PC-9 (cell line): ENCODE measurements at regions of chr12 and their contacts with region 1.

Region 1: DNA sequence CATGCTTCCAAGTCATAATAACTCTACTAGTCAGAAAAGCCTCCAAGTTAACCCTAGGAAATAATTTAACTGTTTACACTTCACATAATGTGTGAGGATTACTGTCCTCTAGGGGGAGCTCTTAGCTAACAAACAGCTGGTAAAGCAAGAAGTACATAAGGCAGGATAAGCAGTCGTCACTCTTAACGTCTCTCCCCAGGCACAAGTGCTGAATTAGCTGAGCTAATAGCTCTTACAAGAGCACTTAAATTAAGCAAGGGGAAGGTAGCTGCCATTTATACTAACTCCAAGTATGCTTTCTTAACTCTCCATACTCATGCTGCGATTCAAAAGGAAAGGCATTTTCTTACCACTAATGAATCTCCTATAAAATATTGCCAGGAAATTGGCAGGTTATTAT is 79.3 kb upstream of the TSPAN11 start:
- DNase-seq: peak; percentile 33 to 61
- H3K4me3 ChIP-seq: no peak overlapping the region
- H3K27ac ChIP-seq: no peak overlapping the region
- H3K4me1 ChIP-seq: peaks cover 5% of the 10 kb centered on the region; the same call in 1 of the 2 replicates
- H3K27me3 ChIP-seq: no peaks in the 10 kb centered on the region
- CTCF ChIP-seq: peak; percentile 97

Region 2: DNA sequence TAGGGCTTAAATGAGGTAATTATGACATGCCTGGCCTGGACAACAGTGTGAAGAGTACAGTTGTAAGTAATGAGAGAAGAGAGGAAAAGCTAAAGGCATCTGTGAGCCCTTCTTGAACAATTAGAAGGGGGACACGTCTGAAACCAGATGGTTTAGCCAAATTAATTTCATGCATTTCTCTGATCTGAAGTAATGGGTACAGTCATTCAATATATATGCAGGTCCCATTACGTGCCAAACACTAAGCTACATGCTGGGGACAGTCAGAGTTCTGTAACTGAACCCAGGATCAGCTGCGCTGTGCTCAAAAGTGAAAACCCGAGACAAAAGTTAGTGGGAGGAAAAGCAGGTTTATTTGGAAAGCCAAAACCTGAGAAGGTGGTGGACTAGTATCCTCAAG is 856.3 kb before region 1 on chr12:
- CTCF ChIA-PET with region 1: interaction called, 11 read pairs
- POLR2A ChIA-PET with region 1: no interaction called
- intact Hi-C with region 1: no loop called
- DNase-seq: no peak
- H3K4me3 ChIP-seq: no peak overlapping the region
- H3K27ac ChIP-seq: no peak overlapping the region
- H3K4me1 ChIP-seq: no peaks in the 10 kb centered on the region
- H3K27me3 ChIP-seq: no peaks in the 10 kb centered on the region
- CTCF ChIP-seq: no peak

Region 3: DNA sequence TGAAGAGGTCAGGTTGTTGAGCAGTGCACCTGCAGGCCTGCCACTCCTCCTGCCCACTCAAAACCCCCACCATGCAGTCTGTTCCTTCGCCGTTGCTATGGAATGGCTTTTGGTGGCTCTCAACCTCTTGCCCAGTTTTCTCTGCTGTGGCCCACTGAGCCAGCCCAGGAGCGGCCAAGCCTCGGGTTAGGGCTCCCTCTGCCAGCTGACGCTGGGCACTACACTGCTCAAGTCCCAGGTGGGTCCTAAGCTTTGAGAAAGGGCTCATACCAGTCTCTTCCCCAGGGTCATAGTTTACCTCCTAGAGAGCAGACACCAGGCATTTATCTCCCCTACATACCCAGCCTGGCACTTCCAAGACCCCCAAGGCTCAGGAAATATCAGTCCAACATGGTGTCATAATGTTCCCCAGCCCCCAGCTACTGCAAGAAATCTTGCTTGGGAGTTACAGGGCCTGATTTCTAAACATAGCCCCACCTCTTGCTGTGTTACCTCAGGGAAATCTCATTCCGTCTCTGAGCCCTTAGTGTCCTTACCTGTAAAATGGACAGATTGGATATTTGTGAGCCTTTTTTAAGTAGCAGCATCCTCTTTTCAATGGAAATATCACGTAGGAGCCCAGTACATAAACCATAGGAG is 138.7 kb after region 1 on chr12:
- CTCF ChIA-PET with region 1: interaction called, 31 read pairs
- POLR2A ChIA-PET with region 1: no interaction called
- intact Hi-C with region 1: loop called (anchors 1 kb)
- DNase-seq: peak in 1 of 2 experiments; percentile 73
- H3K4me3 ChIP-seq: no peak overlapping the region
- H3K27ac ChIP-seq: no peak overlapping the region
- H3K4me1 ChIP-seq: peaks cover 11% of the 10 kb centered on the region
- H3K27me3 ChIP-seq: no peaks in the 10 kb centered on the region
- CTCF ChIP-seq: peak; percentile 84

Region 4: GRCh38 chr12:31238764-31239387 is 391.6 kb after region 1 on chr12:
- CTCF ChIA-PET with region 1: interaction called, 10 read pairs
- POLR2A ChIA-PET with region 1: no interaction called
- intact Hi-C with region 1: loop called (anchors 1 kb)
- DNase-seq: peak in 1 of 2 experiments; percentile 71
- H3K4me3 ChIP-seq: peak overlapping the region; percentile 26; the same call in 1 of the 2 replicates
- H3K27ac ChIP-seq: no peak overlapping the region
- H3K4me1 ChIP-seq: no peaks in the 10 kb centered on the region
- H3K27me3 ChIP-seq: no peaks in the 10 kb centered on the region
- CTCF ChIP-seq: peak; percentile 83

Region 5: DNA sequence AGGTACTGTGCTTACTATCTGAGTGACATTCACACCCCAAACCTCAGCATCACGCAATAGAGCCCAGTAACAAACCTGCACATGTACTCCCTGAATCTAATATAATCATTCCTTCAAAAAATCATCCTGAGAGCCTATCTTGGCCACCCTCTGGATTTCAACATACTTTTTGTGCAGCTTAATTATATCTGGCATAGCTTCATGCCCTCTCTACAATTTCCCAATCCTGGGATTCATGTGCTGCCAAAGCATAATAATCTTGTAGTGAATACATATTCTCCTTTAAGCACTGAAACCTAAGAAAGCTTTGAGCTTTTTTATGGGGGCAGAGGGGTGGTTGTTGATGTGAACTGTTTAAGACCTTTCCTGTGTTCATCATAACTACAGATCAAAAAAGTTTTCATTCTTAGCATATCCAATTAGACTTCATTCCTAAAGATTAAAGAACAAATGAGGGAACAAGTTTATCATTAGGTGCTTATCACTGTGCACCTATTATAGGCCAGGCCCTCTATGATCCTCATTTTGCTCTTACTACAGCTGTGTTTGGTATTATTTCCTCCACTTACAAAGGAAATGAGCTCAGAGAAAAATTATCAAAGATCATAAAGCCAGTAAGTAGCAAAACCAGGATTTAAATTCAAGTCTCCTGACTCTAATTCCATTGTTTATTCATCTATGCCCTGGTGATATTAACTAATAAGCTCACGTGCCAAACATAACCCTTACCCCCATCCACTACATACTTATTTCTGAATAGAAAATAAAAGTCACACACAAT is 427.5 kb after region 1 on chr12:
- CTCF ChIA-PET with region 1: interaction called, 12 read pairs
- POLR2A ChIA-PET with region 1: no interaction called
- intact Hi-C with region 1: loop called (anchors 2 kb)
- DNase-seq: no peak
- H3K4me3 ChIP-seq: no peak overlapping the region
- H3K27ac ChIP-seq: no peak overlapping the region
- H3K4me1 ChIP-seq: no peaks in the 10 kb centered on the region
- H3K27me3 ChIP-seq: no peaks in the 10 kb centered on the region
- CTCF ChIP-seq: no peak